Activated CD8-positive, alpha-beta T cell treated with anti-CD3 and anti-CD28 coated beads, Interleukin-2, amount 10 ng/mL, durations not matched to agents 7 days and 5 days (primary cell): ENCODE measurements at regions of chr1 and their contacts with region 1.

Region 1: GRCh38 chr1:156282479-156283222 is at the start of gene SMG5:
- DNase-seq: peak; percentile 98
- ATAC-seq: peak; percentile 94
- H3K4me3 Mint-ChIP-seq: peak within 1 kb of the TSS; percentile 90
- H3K27ac Mint-ChIP-seq: peak within 1 kb of the TSS; percentile 87
- H3K4me1 Mint-ChIP-seq: peaks cover 40% of the 10 kb centered on the region
- H3K27me3 Mint-ChIP-seq: no peaks in the 10 kb centered on the region
- total RNA-seq, gene SMG5: 75.2 to 78.2 TPM

Region 2: DNA sequence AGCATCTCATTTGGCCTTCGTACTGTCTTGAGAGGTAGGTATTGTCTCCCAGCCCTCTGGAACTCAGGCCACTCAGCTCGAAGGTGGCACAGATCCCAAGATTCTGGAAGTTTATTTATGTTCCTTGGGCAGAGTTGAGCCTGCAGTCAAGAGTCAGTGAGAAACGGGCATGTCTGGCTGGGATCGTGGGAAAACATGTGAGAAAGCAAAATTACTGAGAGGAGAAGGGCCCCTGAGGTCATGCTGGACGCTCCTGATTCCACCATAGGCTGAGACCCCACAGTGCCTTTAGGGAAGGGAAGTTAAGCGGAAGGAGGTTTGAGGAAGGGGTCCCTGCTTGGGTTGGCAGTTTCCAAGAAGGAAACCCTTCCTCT is 141.8 kb before region 1 on chr1:
- CTCF ChIA-PET with region 1: interaction called, 29 read pairs
- POLR2A ChIA-PET with region 1: interaction called, 3 read pairs
- DNase-seq: no peak
- ATAC-seq: no peak
- H3K4me3 Mint-ChIP-seq: no peak overlapping the region
- H3K27ac Mint-ChIP-seq: no peak overlapping the region
- H3K4me1 Mint-ChIP-seq: peaks cover 5% of the 10 kb centered on the region
- H3K27me3 Mint-ChIP-seq: no peaks in the 10 kb centered on the region

Region 3: GRCh38 chr1:156212833-156213643 is 69.6 kb before region 1 on chr1 and contains the start of gene PMF1:
- CTCF ChIA-PET with region 1: interaction called, 4 read pairs
- POLR2A ChIA-PET with region 1: interaction called, 20 read pairs
- DNase-seq: peak; percentile 98
- ATAC-seq: peak; percentile 96
- H3K4me3 Mint-ChIP-seq: peak within 1 kb of the TSS; percentile 96
- H3K27ac Mint-ChIP-seq: peak within 1 kb of the TSS; percentile 99
- H3K4me1 Mint-ChIP-seq: peaks cover 45% of the 10 kb centered on the region
- H3K27me3 Mint-ChIP-seq: no peaks in the 10 kb centered on the region
- total RNA-seq, gene PMF1: 72.3 to 77.3 TPM

Region 4: GRCh38 chr1:156245451-156246232 is 37.0 kb before region 1 on chr1:
- CTCF ChIA-PET with region 1: no interaction called
- POLR2A ChIA-PET with region 1: interaction called, 12 read pairs
- DNase-seq: peak; percentile 65
- ATAC-seq: peak; percentile 82
- H3K4me3 Mint-ChIP-seq: peak overlapping the region; percentile 75
- H3K27ac Mint-ChIP-seq: peak overlapping the region; percentile 93
- H3K4me1 Mint-ChIP-seq: peaks cover 37% of the 10 kb centered on the region
- H3K27me3 Mint-ChIP-seq: no peaks in the 10 kb centered on the region

Region 5: GRCh38 chr1:156295391-156295947 is 12.8 kb after region 1 on chr1 and contains the start of gene GLMP:
- CTCF ChIA-PET with region 1: interaction called, 5 read pairs
- POLR2A ChIA-PET with region 1: interaction called, 25 read pairs
- DNase-seq: peak; percentile 79
- ATAC-seq: peak; percentile 90
- H3K4me3 Mint-ChIP-seq: peak within 1 kb of the TSS; percentile 91
- H3K27ac Mint-ChIP-seq: peak within 1 kb of the TSS; percentile 83
- H3K4me1 Mint-ChIP-seq: peaks cover 19% of the 10 kb centered on the region
- H3K27me3 Mint-ChIP-seq: no peaks in the 10 kb centered on the region
- total RNA-seq, gene GLMP: 27.7 to 29.8 TPM

Region 6: DNA sequence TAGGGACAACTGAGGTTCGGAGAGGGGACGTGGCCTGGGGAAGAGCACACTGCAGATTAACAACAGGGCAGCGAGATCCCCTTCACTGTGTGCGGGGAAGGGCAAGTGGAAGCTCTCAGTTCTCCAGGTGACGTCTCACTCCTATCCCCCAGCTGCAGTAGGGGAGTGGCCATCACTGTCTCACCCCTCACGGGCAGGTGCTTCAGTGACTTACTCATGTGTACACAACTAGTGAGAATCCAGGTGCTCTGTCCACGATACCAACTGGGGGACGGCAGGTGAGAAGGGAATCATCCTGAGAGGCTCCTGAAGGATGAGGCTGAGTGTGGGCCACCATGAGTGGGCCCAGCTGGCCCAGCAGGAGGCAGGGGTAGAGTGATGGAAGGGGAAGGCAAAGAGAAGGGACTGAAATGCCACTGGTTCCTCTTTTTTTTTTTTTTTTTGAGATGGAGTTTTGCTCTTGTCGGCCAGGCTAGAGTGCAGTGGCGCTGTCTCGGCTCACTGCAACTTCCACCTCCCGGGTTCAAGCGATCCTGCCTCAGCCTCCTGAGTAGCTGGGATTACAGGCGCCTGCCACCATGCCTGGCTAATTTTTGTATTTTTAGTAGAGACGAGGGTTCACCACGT is 112.3 kb after region 1 on chr1:
- CTCF ChIA-PET with region 1: no interaction called
- POLR2A ChIA-PET with region 1: no interaction called
- DNase-seq: no peak
- ATAC-seq: no peak
- H3K4me3 Mint-ChIP-seq: no peak overlapping the region
- H3K27ac Mint-ChIP-seq: no peak overlapping the region
- H3K4me1 Mint-ChIP-seq: no peaks in the 10 kb centered on the region
- H3K27me3 Mint-ChIP-seq: peaks cover 12% of the 10 kb centered on the region

Region 7: GRCh38 chr1:156489166-156489934 is 206.7 kb after region 1 on chr1:
- CTCF ChIA-PET with region 1: no interaction called
- POLR2A ChIA-PET with region 1: no interaction called
- DNase-seq: peak; percentile 55
- ATAC-seq: peak; percentile 53
- H3K4me3 Mint-ChIP-seq: peak overlapping the region; percentile 62
- H3K27ac Mint-ChIP-seq: peak overlapping the region; percentile 85
- H3K4me1 Mint-ChIP-seq: peaks cover 81% of the 10 kb centered on the region
- H3K27me3 Mint-ChIP-seq: no peaks in the 10 kb centered on the region

Region 8: GRCh38 chr1:156641761-156642264 is 359.2 kb after region 1 on chr1 and contains the start of gene BCAN:
- CTCF ChIA-PET with region 1: no interaction called
- POLR2A ChIA-PET with region 1: no interaction called
- DNase-seq: no peak
- ATAC-seq: peak; percentile 30
- H3K4me3 Mint-ChIP-seq: peak within 1 kb of the TSS; percentile 29
- H3K27ac Mint-ChIP-seq: no peak within 1 kb of the TSS
- H3K4me1 Mint-ChIP-seq: peaks cover 37% of the 10 kb centered on the region
- H3K27me3 Mint-ChIP-seq: peaks cover 77% of the 10 kb centered on the region
- total RNA-seq, gene BCAN: not detected

Region 9: DNA sequence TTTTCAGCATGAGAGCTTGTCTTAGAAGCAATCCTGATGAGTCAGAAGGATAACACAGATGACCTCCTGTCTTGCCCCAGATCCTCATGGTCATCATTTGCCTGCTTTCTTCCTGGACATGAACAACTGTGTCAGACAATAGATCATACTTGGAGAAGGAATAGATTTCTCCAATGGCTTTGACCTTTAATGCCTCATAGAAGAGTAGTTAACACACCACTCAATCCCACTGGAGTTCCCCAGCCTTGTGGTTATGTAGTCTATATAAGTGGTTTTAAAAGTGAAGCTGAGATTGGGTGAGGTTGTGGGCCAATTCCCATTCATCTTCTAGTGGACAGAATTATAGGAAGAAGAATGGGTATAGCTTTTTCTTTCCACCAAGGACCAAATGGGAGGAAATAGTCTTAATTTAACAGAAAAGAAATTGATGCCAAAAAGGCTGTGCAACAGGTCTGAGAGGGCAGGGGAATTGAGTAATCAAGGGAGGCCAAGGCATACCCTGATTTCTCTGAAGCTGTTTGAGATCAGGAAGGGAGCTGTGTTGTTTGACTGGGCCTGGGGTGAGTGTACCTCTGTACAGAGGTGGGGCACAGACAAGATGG is 499.0 kb after region 1 on chr1:
- CTCF ChIA-PET with region 1: no interaction called
- POLR2A ChIA-PET with region 1: no interaction called
- DNase-seq: no peak
- ATAC-seq: no peak
- H3K4me3 Mint-ChIP-seq: no peak overlapping the region
- H3K27ac Mint-ChIP-seq: peak overlapping the region; percentile 35
- H3K4me1 Mint-ChIP-seq: peaks cover 35% of the 10 kb centered on the region
- H3K27me3 Mint-ChIP-seq: no peaks in the 10 kb centered on the region